ENCODE measurements at regions of chr16 and their contacts with region 1.

Region 1: DNA sequence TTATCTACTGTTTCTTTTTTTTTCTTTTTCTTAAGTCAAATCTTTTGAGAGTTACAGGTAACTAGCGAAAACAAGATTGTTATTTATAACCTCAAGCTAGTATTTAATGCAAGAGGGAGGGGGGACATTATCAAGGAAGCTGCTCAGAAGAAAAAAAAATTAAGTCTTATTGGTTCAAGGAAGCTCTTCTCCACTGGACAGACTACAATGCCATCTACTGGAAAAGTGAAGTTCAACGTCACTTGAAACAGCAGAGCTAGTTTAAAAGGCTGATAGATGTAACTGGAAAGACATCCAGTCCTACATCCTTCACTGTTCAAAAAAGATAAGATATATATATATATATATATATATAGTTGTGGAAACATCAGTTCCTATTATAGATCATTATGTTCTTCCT is 418.0 kb upstream of the PSMD7 start:
- DNase-seq: no peak
- ATAC-seq: peak in 1 of 4 donors; percentile 41
- H3K4me3 ChIP-seq: no peak overlapping the region
- H3K27ac ChIP-seq: no peak overlapping the region
- H3K4me1 ChIP-seq: peaks cover 0 to 1% (median 0%) of the 10 kb centered on the region in 12 donors
- H3K27me3 ChIP-seq: no peaks in the 10 kb centered on the region
- CTCF ChIP-seq: peak; percentile 42 to 76 (median 68)
- POLR2A ChIP-seq: no peak

Region 2: GRCh38 chr16:72400257-72400882 is 1478.2 kb before region 1 on chr16:
- intact Hi-C with region 1: loop called in 5 of 10 experiments (anchors 5 to 10 kb)
- DNase-seq: peak in 1 of 5 donors; percentile 19
- ATAC-seq: peak in 2 of 4 donors; percentile 34 to 60
- H3K4me3 ChIP-seq: no peak overlapping the region
- H3K27ac ChIP-seq: no peak overlapping the region
- H3K4me1 ChIP-seq: no peaks in the 10 kb centered on the region
- H3K27me3 ChIP-seq: no peaks in the 10 kb centered on the region
- CTCF ChIP-seq: peak; percentile 43 to 73 (median 65)
- POLR2A ChIP-seq: no peak

Region 3: DNA sequence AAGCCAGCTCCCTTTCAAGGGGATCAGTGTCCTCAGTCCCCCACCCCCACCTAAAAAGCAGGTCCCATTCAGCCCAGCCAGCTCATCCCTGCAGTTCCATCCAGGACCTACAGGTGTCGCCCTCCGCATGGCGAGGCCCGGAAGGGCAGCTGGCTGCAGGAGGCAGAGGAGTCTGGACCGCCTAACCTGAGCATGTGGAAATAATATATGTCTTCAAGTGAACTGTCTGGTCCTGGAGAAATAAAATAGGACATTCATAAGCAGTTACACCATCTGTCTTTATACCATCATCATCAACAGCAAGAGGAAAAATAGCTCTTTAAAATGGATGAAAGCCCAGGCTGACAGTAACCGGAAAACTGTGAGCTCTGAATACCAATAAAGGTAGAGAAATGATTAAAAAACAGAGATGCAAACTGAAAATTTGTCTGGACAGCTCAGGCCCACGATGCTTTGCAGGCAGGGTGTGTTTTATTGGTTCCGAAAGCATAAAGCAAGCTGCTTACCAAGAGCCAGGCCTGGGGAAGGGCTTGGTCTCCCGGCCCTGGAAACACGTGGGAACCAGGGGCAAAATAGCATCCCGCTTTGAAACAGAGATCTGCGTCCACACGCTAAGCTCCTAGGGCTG is 1045.9 kb before region 1 on chr16:
- intact Hi-C with region 1: loop called in 2 of 10 experiments (anchors 5 to 10 kb)
- DNase-seq: peak; percentile 80 to 92 (median 81)
- ATAC-seq: peak; percentile 81 to 94 (median 94)
- H3K4me3 ChIP-seq: no peak overlapping the region
- H3K27ac ChIP-seq: peak overlapping the region in 4 of 12 donors; percentile 28 to 53 (median 32)
- H3K4me1 ChIP-seq: peaks cover 0 to 34% (median 0%) of the 10 kb centered on the region in 12 donors
- H3K27me3 ChIP-seq: no peaks in the 10 kb centered on the region
- CTCF ChIP-seq: peak in 11 of 12 donors; percentile 93 to 98 (median 96)
- POLR2A ChIP-seq: no peak

Region 4: GRCh38 chr16:73713778-73714495 is 164.7 kb before region 1 on chr16:
- intact Hi-C with region 1: loop called in 5 of 10 experiments (anchors 5 to 10 kb)
- DNase-seq: no peak
- ATAC-seq: no peak
- H3K4me3 ChIP-seq: no peak overlapping the region
- H3K27ac ChIP-seq: no peak overlapping the region
- H3K4me1 ChIP-seq: no peaks in the 10 kb centered on the region
- H3K27me3 ChIP-seq: no peaks in the 10 kb centered on the region
- CTCF ChIP-seq: peak in 11 of 12 donors; percentile 14 to 50 (median 37)
- POLR2A ChIP-seq: no peak

Region 5: GRCh38 chr16:73921295-73921694 is 42.7 kb after region 1 on chr16:
- intact Hi-C with region 1: no loop called
- DNase-seq: no peak
- ATAC-seq: no peak
- H3K4me3 ChIP-seq: no peak overlapping the region
- H3K27ac ChIP-seq: no peak overlapping the region
- H3K4me1 ChIP-seq: no peaks in the 10 kb centered on the region
- H3K27me3 ChIP-seq: peaks cover 0 to 4% (median 0%) of the 10 kb centered on the region in 9 donors
- CTCF ChIP-seq: no peak
- POLR2A ChIP-seq: no peak

Measured in heart left ventricle (tissue), 16 donors.